Esophagus muscularis mucosa (tissue), 4 donors: ENCODE measurements at regions of chr1 and their contacts with region 1.

Region 1: DNA sequence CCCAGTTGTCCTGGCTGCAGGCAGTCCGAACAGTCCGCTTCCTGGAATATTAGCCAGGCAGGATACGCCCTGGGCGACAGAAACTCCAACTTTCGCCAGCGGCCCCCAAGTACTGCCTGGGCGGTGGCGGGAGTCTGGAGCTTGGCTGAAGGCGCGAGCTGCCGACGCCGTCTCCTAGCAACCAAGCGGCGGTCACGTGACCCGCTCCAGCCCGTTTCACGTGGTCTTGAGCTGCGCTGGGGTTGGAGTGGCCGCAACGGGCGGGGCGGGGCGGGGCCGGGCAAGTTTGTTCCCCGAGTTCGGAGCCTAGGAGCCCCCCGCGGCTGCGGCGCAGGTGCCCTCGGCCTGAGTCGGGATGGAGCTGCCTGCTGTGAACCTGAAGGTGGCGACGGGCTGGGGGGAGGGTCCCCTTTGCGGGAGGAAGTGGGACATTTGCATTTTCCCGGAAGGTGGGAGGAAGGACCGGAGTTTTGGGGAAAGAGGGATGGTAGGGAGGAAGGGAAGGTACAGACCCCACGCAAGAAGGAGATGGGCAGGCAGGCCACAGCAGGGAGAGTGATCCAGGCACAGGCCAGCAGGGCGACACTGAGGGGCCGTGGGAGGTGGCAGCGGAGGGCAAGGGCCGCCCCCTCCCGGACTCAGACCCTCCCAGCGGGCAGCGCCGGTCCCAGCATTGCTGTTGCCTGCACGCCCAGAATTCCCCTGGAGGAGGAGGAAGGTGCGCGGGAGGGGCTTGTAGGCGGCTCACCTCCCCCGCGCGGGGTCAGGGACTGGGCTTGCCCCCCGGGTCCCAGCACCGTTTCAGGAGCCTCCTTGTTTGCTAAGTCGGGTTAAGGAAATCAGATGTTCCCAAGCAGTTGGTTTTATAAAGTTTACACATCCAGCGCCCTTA is at the start of gene AGTRAP:
- DNase-seq: peak; percentile 100
- H3K4me3 ChIP-seq: peak within 1 kb of the TSS; percentile 76 to 95 (median 80)
- H3K27ac ChIP-seq: peak within 1 kb of the TSS; percentile 86 to 92 (median 86)
- H3K4me1 ChIP-seq: peaks cover 31 to 65% (median 62%) of the 10 kb centered on the region in 4 donors
- H3K27me3 ChIP-seq: no peaks in the 10 kb centered on the region
- CTCF ChIP-seq: peak in 1 of 3 experiments; percentile 6
- EP300 ChIP-seq: no peak
- POLR2A ChIP-seq: peak; percentile 72
- total RNA-seq, gene AGTRAP: 31.6 to 73.4 (median 45.6) TPM

Region 2: GRCh38 chr1:11563560-11564069 is 172.5 kb before region 1 on chr1:
- intact Hi-C with region 1: no loop called
- DNase-seq: no peak
- H3K4me3 ChIP-seq: no peak overlapping the region
- H3K27ac ChIP-seq: no peak overlapping the region
- H3K4me1 ChIP-seq: no peaks in the 10 kb centered on the region
- H3K27me3 ChIP-seq: peaks cover 0 to 94% (median 5%) of the 10 kb centered on the region in 4 donors
- CTCF ChIP-seq: no peak
- EP300 ChIP-seq: no peak
- POLR2A ChIP-seq: no peak

Region 3: DNA sequence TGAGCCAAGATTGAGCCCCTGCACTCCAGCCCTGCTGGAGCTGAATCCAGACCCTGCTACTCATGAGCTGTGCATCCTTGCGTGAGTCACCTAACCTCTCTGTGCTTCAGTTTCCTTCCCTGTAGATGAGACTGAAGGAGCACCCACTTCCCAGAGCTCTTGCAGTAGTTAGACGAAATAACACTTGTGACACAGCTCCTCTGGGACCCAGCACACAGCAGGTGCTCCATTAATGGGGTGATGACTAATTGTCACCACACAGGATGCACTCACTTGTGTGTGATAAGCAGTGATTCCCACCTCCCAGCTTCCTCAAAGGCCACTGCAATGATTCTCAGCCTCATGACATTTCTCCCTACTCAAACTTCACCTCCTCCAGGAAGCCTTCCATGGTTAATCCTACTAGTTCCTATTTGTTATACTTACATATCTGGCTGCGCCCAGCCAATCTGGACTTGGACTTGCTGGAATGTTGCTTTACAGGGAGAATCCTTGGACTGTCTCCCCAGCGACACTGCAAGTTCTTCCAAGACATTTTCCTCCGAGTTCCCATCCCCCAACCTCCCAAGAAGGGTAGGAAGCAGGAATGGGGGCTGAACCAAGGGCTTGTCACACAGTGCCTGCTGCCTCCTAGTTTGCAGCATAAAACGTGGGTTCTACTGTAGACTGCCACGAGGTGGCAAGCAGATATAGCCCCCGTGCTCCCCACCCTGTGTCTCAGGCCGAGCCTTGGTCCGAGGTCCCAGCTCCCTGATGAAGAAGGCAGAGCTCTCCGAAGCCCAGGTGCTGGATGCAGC is 27.3 kb before region 1 on chr1:
- intact Hi-C with region 1: no loop called
- DNase-seq: no peak
- H3K4me3 ChIP-seq: no peak overlapping the region
- H3K27ac ChIP-seq: no peak overlapping the region
- H3K4me1 ChIP-seq: peaks cover 0 to 9% (median 0%) of the 10 kb centered on the region in 4 donors
- H3K27me3 ChIP-seq: peaks cover 0 to 80% (median 0%) of the 10 kb centered on the region in 4 donors
- CTCF ChIP-seq: no peak
- EP300 ChIP-seq: no peak
- POLR2A ChIP-seq: no peak

Region 4: DNA sequence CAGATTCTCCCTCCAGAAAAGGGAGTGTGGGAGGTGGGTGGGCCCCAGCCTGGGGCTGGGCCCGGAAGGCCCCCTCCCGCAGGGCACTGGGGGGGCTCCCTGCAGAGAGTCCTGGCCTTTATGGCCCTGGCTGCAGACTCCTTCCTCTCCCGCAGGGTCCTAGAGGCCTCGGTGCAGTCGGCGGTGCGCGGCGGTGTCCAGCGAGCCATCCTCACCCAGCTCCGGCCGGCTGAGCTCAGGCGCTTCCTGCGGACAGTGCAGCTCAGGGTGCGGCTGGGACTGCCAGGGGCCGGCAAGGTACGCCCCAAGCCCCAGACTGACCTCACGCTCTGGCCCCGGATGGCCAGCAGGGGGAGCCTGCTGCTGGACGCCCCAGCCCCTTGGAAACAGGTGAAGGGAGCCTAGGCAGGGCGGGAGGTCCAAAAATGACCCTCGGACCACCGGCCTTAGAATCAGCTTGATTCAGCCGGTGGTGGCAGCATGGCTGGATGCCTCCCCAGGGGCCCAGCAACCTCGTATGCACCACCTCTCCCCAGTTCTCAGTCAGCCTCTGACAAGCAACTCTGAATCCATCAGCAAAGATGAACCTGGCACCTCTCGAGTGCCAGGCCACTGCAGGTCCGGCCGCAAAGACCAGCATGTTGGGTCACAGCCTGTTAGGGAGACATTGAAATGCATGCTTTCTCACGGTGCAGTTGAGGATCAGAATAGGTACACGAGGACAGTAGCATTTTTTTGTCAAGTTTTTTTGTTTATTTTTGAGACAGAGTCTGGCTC is 49.1 kb after region 1 on chr1:
- intact Hi-C with region 1: loop called (anchors 5 kb)
- DNase-seq: no peak
- H3K4me3 ChIP-seq: peak overlapping the region; percentile 34 to 52 (median 40)
- H3K27ac ChIP-seq: peak overlapping the region; percentile 47 to 57 (median 48)
- H3K4me1 ChIP-seq: peaks cover 53 to 60% (median 59%) of the 10 kb centered on the region in 4 donors
- H3K27me3 ChIP-seq: no peaks in the 10 kb centered on the region
- CTCF ChIP-seq: peak; percentile 77 to 92 (median 78)
- EP300 ChIP-seq: no peak
- POLR2A ChIP-seq: no peak